GM12878 (cell line): ENCODE measurements at regions of chr16 and their contacts with region 1.

Region 1: GRCh38 chr16:5633845-5634440 is 536.3 kb upstream of the EEF2KMT start:
- DNase-seq: no peak
- ATAC-seq: peak; percentile 36; the same call in 1 of the 3 replicates
- H3K4me3 ChIP-seq: no peak overlapping the region
- H3K27ac ChIP-seq: no peak overlapping the region
- H3K4me1 ChIP-seq: no peaks in the 10 kb centered on the region
- H3K27me3 ChIP-seq: no peaks in the 10 kb centered on the region
- CTCF ChIP-seq: peak in 2 of 3 experiments; percentile 43 to 46; a peak in 5 of 6 replicates
- EP300 ChIP-seq: no peak
- POLR2A ChIP-seq: no peak
- RAD21 ChIP-seq: 0 out of 2 replicates have a peak, but pooled peaks have one; percentile 22

Region 2: GRCh38 chr16:5693426-5693825 is 59.5 kb after region 1 on chr16:
- CTCF ChIA-PET with region 1: no interaction called
- POLR2A ChIA-PET with region 1: no interaction called
- RAD21 ChIA-PET with region 1: no interaction called
- SMC1A ChIA-PET with region 1: no interaction called
- in situ Hi-C with region 1: no loop called
- intact Hi-C with region 1: loop called (anchors 2 kb)
- DNase-seq: no peak
- ATAC-seq: no peak
- H3K4me3 ChIP-seq: no peak overlapping the region
- H3K27ac ChIP-seq: no peak overlapping the region
- H3K4me1 ChIP-seq: no peaks in the 10 kb centered on the region
- H3K27me3 ChIP-seq: no peaks in the 10 kb centered on the region; a peak in 1 of 4 replicates
- CTCF ChIP-seq: no peak
- EP300 ChIP-seq: no peak
- POLR2A ChIP-seq: no peak
- RAD21 ChIP-seq: no peak